ENCODE measurements at regions of chr7 and their contacts with region 1.

Region 1: DNA sequence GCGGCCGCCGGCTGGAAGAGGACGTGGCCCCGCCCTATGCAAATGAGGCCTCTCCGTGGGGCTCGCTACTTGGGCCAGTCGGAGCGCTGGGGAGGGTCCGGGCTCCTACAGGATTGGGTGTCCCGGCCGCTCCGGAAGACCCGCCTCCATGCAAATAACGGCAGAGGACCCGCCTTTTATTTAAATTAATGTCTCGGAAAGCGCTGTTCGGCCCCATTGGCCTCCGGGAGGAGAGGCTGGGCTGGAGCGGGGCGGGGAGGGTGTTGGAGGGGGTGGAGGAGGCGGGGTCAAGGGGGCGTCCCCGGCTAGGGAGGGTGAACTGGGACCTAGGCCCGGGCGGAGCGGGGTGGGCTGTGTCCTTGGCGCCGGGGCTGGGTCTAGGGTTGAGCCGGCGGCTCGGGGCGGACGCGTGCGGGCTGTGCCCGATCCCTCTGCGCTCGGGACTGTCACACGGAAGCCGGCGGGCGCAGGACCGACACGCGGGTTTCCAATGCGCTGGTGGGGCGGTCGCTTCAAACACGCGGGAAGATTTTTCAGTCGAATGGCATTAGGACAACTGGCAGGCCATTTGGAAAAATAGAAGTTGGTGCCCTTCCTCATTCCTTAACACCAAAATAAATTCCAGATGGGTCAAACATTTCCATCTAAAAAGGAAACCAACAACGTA is 344 bp upstream of the POLM start:
- DNase-seq: peak; percentile 99
- ATAC-seq: peak; percentile 95
- H3K4me3 Mint-ChIP-seq: peak overlapping the region; percentile 70
- H3K27ac Mint-ChIP-seq: peak overlapping the region; percentile 79
- H3K4me1 Mint-ChIP-seq: peaks cover 36% of the 10 kb centered on the region
- H3K27me3 Mint-ChIP-seq: no peaks in the 10 kb centered on the region

Region 2: DNA sequence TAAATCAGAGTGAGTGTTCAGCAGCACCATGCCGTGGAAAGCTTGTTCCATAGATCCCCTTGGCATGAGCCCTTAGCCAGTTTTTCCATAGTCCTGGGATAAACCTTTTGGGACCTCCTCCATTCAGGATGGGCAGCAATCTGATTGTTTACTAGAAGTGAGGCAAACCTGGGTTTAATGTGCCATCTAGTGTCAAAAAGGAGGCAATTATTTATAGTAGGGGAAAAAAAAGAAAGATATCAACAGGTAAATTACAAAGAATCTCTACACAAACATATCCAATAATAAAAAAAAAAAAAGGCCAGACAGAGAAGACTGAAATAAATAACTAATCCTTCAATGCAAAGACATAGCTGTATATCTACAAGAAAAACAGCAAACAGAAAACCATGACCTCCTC is 728.8 kb before region 1 on chr7:
- CTCF ChIA-PET with region 1: no interaction called
- POLR2A ChIA-PET with region 1: no interaction called
- intact Hi-C with region 1: no loop called
- DNase-seq: no peak
- ATAC-seq: no peak
- H3K4me3 Mint-ChIP-seq: no peak overlapping the region
- H3K27ac Mint-ChIP-seq: no peak overlapping the region
- H3K4me1 Mint-ChIP-seq: no peaks in the 10 kb centered on the region
- H3K27me3 Mint-ChIP-seq: peaks cover 50% of the 10 kb centered on the region

Region 3: DNA sequence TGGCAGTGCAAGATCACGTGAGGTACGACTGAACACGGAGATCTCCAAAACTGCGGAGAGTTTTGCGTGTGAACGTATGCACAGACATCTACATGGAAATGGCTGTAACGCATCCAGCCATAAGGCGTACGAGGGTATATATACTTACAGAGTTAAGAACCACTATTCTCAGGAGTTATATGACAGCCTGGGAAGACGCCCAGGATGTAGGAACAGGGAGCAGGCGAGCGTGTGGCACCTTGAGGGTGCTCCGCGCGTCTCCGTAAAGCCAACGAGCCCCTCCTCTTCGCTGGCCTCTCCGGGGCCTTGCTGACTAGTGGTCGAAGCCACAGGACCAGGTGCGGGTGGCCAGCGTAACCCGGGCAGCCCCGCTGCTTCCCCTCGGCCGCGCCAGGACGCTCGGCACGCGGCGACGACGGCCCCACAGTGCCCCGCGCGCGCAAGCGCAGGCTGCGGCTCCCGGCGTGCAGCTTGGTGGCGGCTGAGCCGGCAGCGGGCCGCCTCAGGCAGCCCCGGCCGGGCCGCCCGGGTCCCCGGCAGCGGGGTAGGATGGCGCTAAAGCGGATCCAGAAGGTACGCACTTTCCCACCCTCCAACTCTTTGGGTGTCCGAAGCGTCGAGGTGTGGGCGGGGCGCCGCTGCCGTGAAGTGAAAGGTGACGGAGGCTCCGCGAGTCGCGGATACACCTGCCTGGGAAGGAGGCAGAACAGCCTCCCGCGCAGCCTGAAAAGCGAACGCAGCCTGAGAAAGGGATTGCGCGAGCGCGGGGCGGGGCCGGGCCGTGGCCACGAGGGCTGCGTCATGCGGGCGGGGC is 156.5 kb before region 1 on chr7 and contains the start of gene UBE2D4:
- CTCF ChIA-PET with region 1: no interaction called
- POLR2A ChIA-PET with region 1: interaction called, 3 read pairs
- intact Hi-C with region 1: loop called in 1 of 2 experiments (anchors 1 kb)
- DNase-seq: peak; percentile 94
- ATAC-seq: peak; percentile 92
- H3K4me3 Mint-ChIP-seq: peak within 1 kb of the TSS; percentile 91
- H3K27ac Mint-ChIP-seq: peak within 1 kb of the TSS; percentile 98
- H3K4me1 Mint-ChIP-seq: peaks cover 29% of the 10 kb centered on the region
- H3K27me3 Mint-ChIP-seq: no peaks in the 10 kb centered on the region
- total RNA-seq, gene UBE2D4: 10.1 to 10.7 TPM

Region 4: GRCh38 chr7:44123190-44124003 is 40.7 kb after region 1 on chr7 and contains the start of gene POLD2:
- CTCF ChIA-PET with region 1: interaction called, 9 read pairs
- POLR2A ChIA-PET with region 1: interaction called, 3 read pairs
- intact Hi-C with region 1: loop called (anchors 1 kb)
- DNase-seq: peak; percentile 99
- ATAC-seq: peak; percentile 100
- H3K4me3 Mint-ChIP-seq: peak within 1 kb of the TSS; percentile 86
- H3K27ac Mint-ChIP-seq: peak within 1 kb of the TSS; percentile 89
- H3K4me1 Mint-ChIP-seq: peaks cover 42% of the 10 kb centered on the region
- H3K27me3 Mint-ChIP-seq: no peaks in the 10 kb centered on the region
- total RNA-seq, gene POLD2: 250 to 347 TPM

Region 5: GRCh38 chr7:44200647-44201461 is 118.2 kb after region 1 on chr7 and contains the start of gene YKT6:
- CTCF ChIA-PET with region 1: interaction called, 5 read pairs
- POLR2A ChIA-PET with region 1: no interaction called
- intact Hi-C with region 1: loop called in 1 of 2 experiments (anchors 1 kb)
- DNase-seq: peak; percentile 97
- ATAC-seq: peak; percentile 99
- H3K4me3 Mint-ChIP-seq: peak within 1 kb of the TSS; percentile 80
- H3K27ac Mint-ChIP-seq: peak within 1 kb of the TSS; percentile 75
- H3K4me1 Mint-ChIP-seq: peaks cover 26% of the 10 kb centered on the region
- H3K27me3 Mint-ChIP-seq: peaks cover 6% of the 10 kb centered on the region
- total RNA-seq, gene YKT6: 51.0 to 51.3 TPM

Region 6: GRCh38 chr7:44573464-44574286 is 491.0 kb after region 1 on chr7 and contains the start of gene DDX56:
- CTCF ChIA-PET with region 1: no interaction called
- POLR2A ChIA-PET with region 1: no interaction called
- intact Hi-C with region 1: loop called in 1 of 2 experiments (anchors 5 kb)
- DNase-seq: peak; percentile 97
- ATAC-seq: peak; percentile 98
- H3K4me3 Mint-ChIP-seq: peak within 1 kb of the TSS; percentile 90
- H3K27ac Mint-ChIP-seq: peak within 1 kb of the TSS; percentile 94
- H3K4me1 Mint-ChIP-seq: peaks cover 41% of the 10 kb centered on the region
- H3K27me3 Mint-ChIP-seq: no peaks in the 10 kb centered on the region
- total RNA-seq, gene DDX56: 98.5 to 104 TPM

Region 7: GRCh38 chr7:44769776-44770662 is 687.3 kb after region 1 on chr7:
- CTCF ChIA-PET with region 1: no interaction called
- POLR2A ChIA-PET with region 1: no interaction called
- intact Hi-C with region 1: no loop called
- DNase-seq: peak; percentile 28
- ATAC-seq: peak; percentile 45
- H3K4me3 Mint-ChIP-seq: no peak overlapping the region
- H3K27ac Mint-ChIP-seq: peak overlapping the region; percentile 32
- H3K4me1 Mint-ChIP-seq: peaks cover 31% of the 10 kb centered on the region
- H3K27me3 Mint-ChIP-seq: no peaks in the 10 kb centered on the region

Measured in activated CD4-positive, alpha-beta T cell treated with anti-CD3 and anti-CD28 coated beads for 36 hours (primary cell).